CD4-positive, alpha-beta memory T cell (primary cell): ENCODE measurements at regions of chr3 and their contacts with region 1.

Region 1: DNA sequence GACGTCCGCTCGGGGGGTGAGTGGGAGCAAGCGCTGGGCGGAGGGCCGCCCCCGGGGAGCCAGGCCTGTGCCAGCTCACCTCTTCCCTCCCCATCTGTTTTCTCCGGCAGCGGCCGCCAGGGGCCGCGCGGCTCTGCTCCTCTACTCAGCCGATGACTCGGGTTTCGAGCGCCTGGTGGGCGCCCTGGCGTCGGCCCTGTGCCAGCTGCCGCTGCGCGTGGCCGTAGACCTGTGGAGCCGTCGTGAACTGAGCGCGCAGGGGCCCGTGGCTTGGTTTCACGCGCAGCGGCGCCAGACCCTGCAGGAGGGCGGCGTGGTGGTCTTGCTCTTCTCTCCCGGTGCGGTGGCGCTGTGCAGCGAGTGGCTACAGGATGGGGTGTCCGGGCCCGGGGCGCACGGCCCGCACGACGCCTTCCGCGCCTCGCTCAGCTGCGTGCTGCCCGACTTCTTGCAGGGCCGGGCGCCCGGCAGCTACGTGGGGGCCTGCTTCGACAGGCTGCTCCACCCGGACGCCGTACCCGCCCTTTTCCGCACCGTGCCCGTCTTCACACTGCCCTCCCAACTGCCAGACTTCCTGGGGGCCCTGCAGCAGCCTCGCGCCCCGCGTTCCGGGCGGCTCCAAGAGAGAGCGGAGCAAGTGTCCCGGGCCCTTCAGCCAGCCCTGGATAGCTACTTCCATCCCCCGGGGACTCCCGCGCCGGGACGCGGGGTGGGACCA is 632 bp upstream of the CRELD1 start:
- DNase-seq: peak; percentile 83 to 90 (median 85)
- H3K4me3 ChIP-seq: peak overlapping the region; percentile 13 to 87
- H3K4me3 Mint-ChIP-seq: peak overlapping the region; percentile 95 to 98 (median 97)
- H3K27ac ChIP-seq: peak overlapping the region; percentile 89
- H3K27ac Mint-ChIP-seq: peak overlapping the region; percentile 94 to 100 (median 99)
- H3K4me1 ChIP-seq: peaks cover 34% of the 10 kb centered on the region
- H3K4me1 Mint-ChIP-seq: peaks cover 18 to 55% (median 39%) of the 10 kb centered on the region in 4 donors
- H3K27me3 ChIP-seq: no peaks in the 10 kb centered on the region
- H3K27me3 Mint-ChIP-seq: no peaks in the 10 kb centered on the region

Region 2: GRCh38 chr3:9396700-9397521 is 536.1 kb before region 1 on chr3:
- CTCF ChIA-PET with region 1: no interaction called
- POLR2A ChIA-PET with region 1: interaction called, 15 read pairs
- intact Hi-C with region 1: no loop called
- DNase-seq: peak; percentile 99 to 100 (median 100)
- H3K4me3 ChIP-seq: peak overlapping the region in 1 of 2 donors; percentile 71
- H3K4me3 Mint-ChIP-seq: peak overlapping the region; percentile 90 to 99 (median 96)
- H3K27ac ChIP-seq: peak overlapping the region; percentile 83
- H3K27ac Mint-ChIP-seq: peak overlapping the region; percentile 96 to 99 (median 99)
- H3K4me1 ChIP-seq: peaks cover 73% of the 10 kb centered on the region
- H3K4me1 Mint-ChIP-seq: peaks cover 49 to 87% (median 68%) of the 10 kb centered on the region in 4 donors
- H3K27me3 ChIP-seq: no peaks in the 10 kb centered on the region
- H3K27me3 Mint-ChIP-seq: peaks cover 0 to 3% of the 10 kb centered on the region in 2 donors

Region 3: GRCh38 chr3:9792405-9793160 is 140.4 kb before region 1 on chr3 and contains the starts of genes ARPC4 and TADA3:
- CTCF ChIA-PET with region 1: interaction called, 3 read pairs
- POLR2A ChIA-PET with region 1: interaction called, 32 read pairs
- intact Hi-C with region 1: loop called (anchors 1 kb)
- DNase-seq: peak; percentile 92 to 97 (median 96)
- H3K4me3 ChIP-seq: peak within 1 kb of the TSS; percentile 91 to 100
- H3K4me3 Mint-ChIP-seq: peak within 1 kb of the TSS; percentile 96 to 99 (median 98)
- H3K27ac ChIP-seq: peak within 1 kb of the TSS; percentile 99
- H3K27ac Mint-ChIP-seq: peak within 1 kb of the TSS; percentile 97 to 99 (median 99)
- H3K4me1 ChIP-seq: peaks cover 63% of the 10 kb centered on the region
- H3K4me1 Mint-ChIP-seq: peaks cover 47 to 80% (median 56%) of the 10 kb centered on the region in 4 donors
- H3K27me3 ChIP-seq: no peaks in the 10 kb centered on the region
- H3K27me3 Mint-ChIP-seq: no peaks in the 10 kb centered on the region
- total RNA-seq, gene ARPC4: 164 to 168 TPM
- total RNA-seq, gene TADA3: 37.6 to 41.4 TPM

Region 4: GRCh38 chr3:9902372-9903237 is 30.4 kb before region 1 on chr3 and contains the start of gene IL17RE:
- CTCF ChIA-PET with region 1: interaction called, 17 read pairs
- POLR2A ChIA-PET with region 1: interaction called, 30 read pairs
- intact Hi-C with region 1: no loop called
- DNase-seq: peak in 3 of 5 donors; percentile 14 to 33 (median 23)
- H3K4me3 ChIP-seq: peak within 1 kb of the TSS in 1 of 2 donors; percentile 17
- H3K4me3 Mint-ChIP-seq: peak within 1 kb of the TSS; percentile 59 to 80 (median 74)
- H3K27ac ChIP-seq: peak within 1 kb of the TSS; percentile 35
- H3K27ac Mint-ChIP-seq: peak within 1 kb of the TSS; percentile 67 to 94 (median 88)
- H3K4me1 ChIP-seq: peaks cover 29% of the 10 kb centered on the region
- H3K4me1 Mint-ChIP-seq: peaks cover 24 to 41% (median 25%) of the 10 kb centered on the region in 4 donors
- H3K27me3 ChIP-seq: no peaks in the 10 kb centered on the region
- H3K27me3 Mint-ChIP-seq: no peaks in the 10 kb centered on the region
- total RNA-seq, gene IL17RE: 1.5 to 2.4 TPM

Region 5: GRCh38 chr3:9986237-9986725 is 53.3 kb after region 1 on chr3:
- CTCF ChIA-PET with region 1: interaction called, 12 read pairs
- POLR2A ChIA-PET with region 1: interaction called, 27 read pairs
- intact Hi-C with region 1: loop called (anchors 1 kb)
- DNase-seq: no peak
- H3K4me3 ChIP-seq: peak overlapping the region; percentile 90 to 91
- H3K4me3 Mint-ChIP-seq: peak overlapping the region; percentile 95 to 99 (median 98)
- H3K27ac ChIP-seq: peak overlapping the region; percentile 96
- H3K27ac Mint-ChIP-seq: peak overlapping the region; percentile 98 to 100 (median 99)
- H3K4me1 ChIP-seq: peaks cover 31% of the 10 kb centered on the region
- H3K4me1 Mint-ChIP-seq: peaks cover 11 to 38% (median 27%) of the 10 kb centered on the region in 4 donors
- H3K27me3 ChIP-seq: no peaks in the 10 kb centered on the region
- H3K27me3 Mint-ChIP-seq: no peaks in the 10 kb centered on the region

Region 6: GRCh38 chr3:10224784-10225665 is 292.0 kb after region 1 on chr3:
- CTCF ChIA-PET with region 1: interaction called, 6 read pairs
- POLR2A ChIA-PET with region 1: interaction called, 15 read pairs
- intact Hi-C with region 1: loop called (anchors 1 kb)
- DNase-seq: peak; percentile 59 to 67 (median 60)
- H3K4me3 ChIP-seq: no peak overlapping the region
- H3K4me3 Mint-ChIP-seq: peak overlapping the region in 7 of 8 donors; percentile 49 to 83 (median 65)
- H3K27ac ChIP-seq: no peak overlapping the region
- H3K27ac Mint-ChIP-seq: peak overlapping the region; percentile 70 to 95 (median 91)
- H3K4me1 ChIP-seq: peaks cover 76% of the 10 kb centered on the region
- H3K4me1 Mint-ChIP-seq: peaks cover 47 to 79% (median 59%) of the 10 kb centered on the region in 4 donors
- H3K27me3 ChIP-seq: no peaks in the 10 kb centered on the region
- H3K27me3 Mint-ChIP-seq: no peaks in the 10 kb centered on the region

Region 7: GRCh38 chr3:10738688-10739372 is 805.8 kb after region 1 on chr3:
- CTCF ChIA-PET with region 1: interaction called, 4 read pairs
- POLR2A ChIA-PET with region 1: no interaction called
- intact Hi-C with region 1: loop called (anchors 2 kb)
- DNase-seq: peak; percentile 54 to 64 (median 59)
- H3K4me3 ChIP-seq: no peak overlapping the region
- H3K4me3 Mint-ChIP-seq: peak overlapping the region in 7 of 8 donors; percentile 7 to 77 (median 51)
- H3K27ac ChIP-seq: no peak overlapping the region
- H3K27ac Mint-ChIP-seq: peak overlapping the region in 1 of 7 donors; percentile 63
- H3K4me1 ChIP-seq: peaks cover 5% of the 10 kb centered on the region
- H3K4me1 Mint-ChIP-seq: peaks cover 5 to 14% (median 9%) of the 10 kb centered on the region in 4 donors
- H3K27me3 ChIP-seq: peaks cover 16% of the 10 kb centered on the region
- H3K27me3 Mint-ChIP-seq: peaks cover 41 to 55% of the 10 kb centered on the region in 2 donors